Activated CD4-positive, alpha-beta T cell treated with anti-CD3 and anti-CD28 coated beads for 36 hours (primary cell): ENCODE measurements at regions of chr2 and their contacts with region 1.

Region 1: GRCh38 chr2:25756536-25756935 is 83.2 kb upstream of the DTNB start:
- DNase-seq: no peak
- ATAC-seq: no peak
- H3K4me3 Mint-ChIP-seq: no peak overlapping the region
- H3K27ac Mint-ChIP-seq: no peak overlapping the region
- H3K4me1 Mint-ChIP-seq: peaks cover 19% of the 10 kb centered on the region
- H3K27me3 Mint-ChIP-seq: no peaks in the 10 kb centered on the region

Region 2: DNA sequence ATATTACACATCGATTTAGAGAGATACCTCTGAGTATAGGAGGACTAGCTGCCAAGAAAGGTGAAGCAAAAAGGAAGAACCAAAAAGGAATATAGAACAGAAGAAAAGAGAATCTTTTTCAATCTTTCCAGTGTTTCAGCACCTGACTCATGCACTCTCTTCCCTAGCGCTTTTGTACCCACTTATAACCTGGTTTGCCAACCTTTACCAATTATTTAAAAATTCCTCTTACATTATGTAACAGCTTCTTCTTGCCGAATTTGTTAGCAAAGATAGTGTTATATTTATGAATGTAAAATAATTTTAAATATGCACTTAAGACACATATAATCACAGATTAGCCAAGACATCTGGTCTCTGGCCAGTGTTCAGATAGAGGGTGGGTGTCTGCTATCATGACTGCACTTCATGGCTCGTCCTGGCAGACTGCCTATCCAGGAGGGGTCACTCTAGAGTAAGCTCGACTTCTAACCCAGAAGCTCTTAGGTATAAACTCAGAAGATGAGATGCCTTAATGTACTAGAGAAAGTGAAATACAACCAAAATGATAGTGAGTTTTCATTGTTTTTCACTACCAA is 1952.5 kb before region 1 on chr2:
- CTCF ChIA-PET with region 1: no interaction called
- POLR2A ChIA-PET with region 1: no interaction called
- intact Hi-C with region 1: no loop called
- DNase-seq: peak; percentile 13
- ATAC-seq: peak; percentile 23
- H3K4me3 Mint-ChIP-seq: no peak overlapping the region
- H3K27ac Mint-ChIP-seq: no peak overlapping the region
- H3K4me1 Mint-ChIP-seq: peaks cover 5% of the 10 kb centered on the region
- H3K27me3 Mint-ChIP-seq: no peaks in the 10 kb centered on the region

Region 3: GRCh38 chr2:25722224-25722623 is 34.3 kb before region 1 on chr2:
- CTCF ChIA-PET with region 1: interaction called, 3 read pairs
- POLR2A ChIA-PET with region 1: interaction called, 10 read pairs
- intact Hi-C with region 1: no loop called
- DNase-seq: no peak
- ATAC-seq: no peak
- H3K4me3 Mint-ChIP-seq: no peak overlapping the region
- H3K27ac Mint-ChIP-seq: no peak overlapping the region
- H3K4me1 Mint-ChIP-seq: peaks cover 6% of the 10 kb centered on the region
- H3K27me3 Mint-ChIP-seq: no peaks in the 10 kb centered on the region

Region 4: GRCh38 chr2:26008822-26009566 is 252.5 kb after region 1 on chr2:
- CTCF ChIA-PET with region 1: no interaction called
- POLR2A ChIA-PET with region 1: interaction called, 10 read pairs
- intact Hi-C with region 1: no loop called
- DNase-seq: no peak
- ATAC-seq: no peak
- H3K4me3 Mint-ChIP-seq: no peak overlapping the region
- H3K27ac Mint-ChIP-seq: no peak overlapping the region
- H3K4me1 Mint-ChIP-seq: no peaks in the 10 kb centered on the region
- H3K27me3 Mint-ChIP-seq: no peaks in the 10 kb centered on the region